ENCODE measurements at regions of chr19 and their contacts with region 1.

Region 1: DNA sequence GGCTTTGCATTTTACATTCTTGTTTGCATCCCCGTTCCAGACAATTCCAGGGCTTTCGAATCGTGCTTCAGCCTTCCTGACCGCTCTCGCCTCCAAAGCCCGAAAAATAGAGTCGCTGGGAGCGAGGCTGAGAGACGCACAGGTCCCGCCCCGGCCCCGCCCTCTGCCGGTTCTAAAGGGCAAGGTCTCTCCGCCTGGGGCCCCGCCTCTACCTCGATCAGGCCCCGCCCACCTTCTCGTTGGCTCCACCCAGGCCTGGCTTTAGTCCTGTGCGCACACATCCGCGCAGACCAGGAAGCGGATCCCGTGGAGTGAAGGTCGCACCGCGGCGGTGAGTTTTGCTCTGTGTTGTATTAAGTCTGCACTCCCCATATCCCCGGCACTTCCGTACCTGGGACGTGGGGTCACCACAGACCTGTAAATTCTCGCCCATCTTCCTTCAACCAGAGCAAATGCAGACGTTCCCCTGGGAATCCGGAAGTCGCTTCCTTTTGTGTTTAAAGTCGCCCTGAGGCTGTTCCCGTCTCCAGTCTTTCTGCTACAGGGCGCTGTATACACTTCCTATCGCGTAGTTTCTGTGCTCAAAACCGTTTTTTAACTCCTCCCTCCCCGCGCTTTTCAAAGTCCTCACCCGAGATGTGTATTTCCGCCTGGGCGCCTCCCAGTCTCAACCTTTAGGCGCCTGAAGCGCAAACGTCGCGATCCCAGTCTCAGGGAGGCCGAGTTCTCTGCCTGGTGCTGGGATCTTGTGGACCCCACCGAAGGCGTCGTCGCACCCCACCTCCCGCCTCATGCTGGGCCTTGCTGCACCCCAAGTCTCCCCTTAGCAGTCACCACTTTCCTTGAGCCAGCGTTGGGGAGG is at the start of gene ZNF701:
- DNase-seq: peak; percentile 94
- H3K4me3 Mint-ChIP-seq: peak within 1 kb of the TSS; percentile 97
- H3K27ac Mint-ChIP-seq: peak within 1 kb of the TSS; percentile 97
- H3K4me1 Mint-ChIP-seq: peaks cover 10% of the 10 kb centered on the region
- H3K27me3 Mint-ChIP-seq: no peaks in the 10 kb centered on the region
- total RNA-seq, gene ZNF701: 17.1 and 17.8 TPM in 2 replicates

Region 2: GRCh38 chr19:52527134-52527955 is 42.9 kb before region 1 on chr19 and contains the start of gene ZNF808:
- intact Hi-C with region 1: loop called (anchors 1 kb)
- DNase-seq: peak; percentile 87
- H3K4me3 Mint-ChIP-seq: peak within 1 kb of the TSS; percentile 96
- H3K27ac Mint-ChIP-seq: peak within 1 kb of the TSS; percentile 97
- H3K4me1 Mint-ChIP-seq: peaks cover 12% of the 10 kb centered on the region
- H3K27me3 Mint-ChIP-seq: no peaks in the 10 kb centered on the region
- total RNA-seq, gene ZNF808: 20.7 and 22.6 TPM in 2 replicates

Region 3: GRCh38 chr19:52601025-52601973 is 31.1 kb after region 1 on chr19:
- intact Hi-C with region 1: loop called (anchors 2 kb)
- DNase-seq: peak; percentile 88
- H3K4me3 Mint-ChIP-seq: peak overlapping the region; percentile 89
- H3K27ac Mint-ChIP-seq: peak overlapping the region; percentile 35
- H3K4me1 Mint-ChIP-seq: peaks cover 10% of the 10 kb centered on the region
- H3K27me3 Mint-ChIP-seq: no peaks in the 10 kb centered on the region

Measured in activated T-helper 2 cell treated with anti-CD3 and anti-CD28 coated beads, Interferon-gamma antibody, Interleukin-2, Interleukin-4, amounts not matched to agents 10 μg/mL and 5 μg/mL and 100 μg/mL, durations not matched to agents 14 hours and 24 hours and 36 hours (primary cell).